Esophagus muscularis mucosa (tissue), 4 donors: ENCODE measurements at regions of chr5 and their contacts with region 1.

Region 1: GRCh38 chr5:151699071-151699901 is 12.6 kb upstream of the SPARC start:
- DNase-seq: no peak
- H3K4me3 ChIP-seq: peak overlapping the region in 3 of 4 donors; percentile 11 to 19 (median 13)
- H3K27ac ChIP-seq: peak overlapping the region; percentile 67 to 76 (median 74)
- H3K4me1 ChIP-seq: peaks cover 12 to 55% (median 51%) of the 10 kb centered on the region in 4 donors
- H3K27me3 ChIP-seq: no peaks in the 10 kb centered on the region
- CTCF ChIP-seq: no peak
- EP300 ChIP-seq: no peak
- POLR2A ChIP-seq: no peak

Region 2: DNA sequence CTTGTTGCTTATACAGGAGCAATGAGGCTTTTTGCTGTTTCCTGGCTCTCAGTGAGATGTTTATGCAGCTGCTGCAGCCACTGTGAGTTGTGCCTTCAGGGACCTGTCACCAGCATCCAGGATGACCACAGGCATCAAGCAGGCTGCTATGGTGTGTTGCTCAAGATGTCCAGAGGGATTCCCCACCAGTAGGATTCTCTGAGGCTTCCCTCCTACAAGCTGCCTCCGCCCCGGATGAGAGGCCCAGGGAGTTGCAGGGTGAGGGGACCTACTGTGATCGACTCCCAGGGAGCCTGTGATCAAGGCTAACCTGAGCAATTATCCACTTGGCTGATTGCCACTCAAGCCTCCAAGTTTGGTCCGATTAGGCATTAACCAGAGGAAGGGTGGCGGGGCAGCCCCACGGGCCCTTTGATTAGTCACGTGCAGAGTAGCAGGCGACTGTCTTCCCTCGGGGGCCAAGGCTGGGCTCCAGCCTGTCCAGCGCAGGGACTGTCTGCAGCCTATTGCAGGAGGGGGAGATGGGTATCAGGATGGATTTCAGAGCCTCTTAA is 106.4 kb before region 1 on chr5:
- intact Hi-C with region 1: no loop called
- DNase-seq: no peak
- H3K4me3 ChIP-seq: no peak overlapping the region
- H3K27ac ChIP-seq: no peak overlapping the region
- H3K4me1 ChIP-seq: peaks cover 0 to 6% (median 2%) of the 10 kb centered on the region in 4 donors
- H3K27me3 ChIP-seq: no peaks in the 10 kb centered on the region
- CTCF ChIP-seq: no peak
- EP300 ChIP-seq: no peak
- POLR2A ChIP-seq: no peak

Region 3: GRCh38 chr5:151740336-151740942 is 41.2 kb after region 1 on chr5:
- intact Hi-C with region 1: loop called (anchors 5 kb)
- DNase-seq: no peak
- H3K4me3 ChIP-seq: peak overlapping the region in 3 of 4 donors; percentile 22 to 31 (median 25)
- H3K27ac ChIP-seq: peak overlapping the region; percentile 75 to 79 (median 78)
- H3K4me1 ChIP-seq: peaks cover 31 to 52% (median 45%) of the 10 kb centered on the region in 4 donors
- H3K27me3 ChIP-seq: no peaks in the 10 kb centered on the region
- CTCF ChIP-seq: peak; percentile 88 to 97 (median 97)
- EP300 ChIP-seq: no peak
- POLR2A ChIP-seq: no peak